Activated T-helper 1 cell treated with anti-CD3 and anti-CD28 coated beads, Interleukin-12 subunit alpha, Interleukin-12 subunit beta, Interleukin-2, Interleukin-4 antibody, amounts not matched to agents 30 ng/mL and 10 ng/mL and 1 ng/mL, durations not matched to agents 14 hours and 24 hours and 36 hours (primary cell): ENCODE measurements at regions of chr15 and their contacts with region 1.

Region 1: DNA sequence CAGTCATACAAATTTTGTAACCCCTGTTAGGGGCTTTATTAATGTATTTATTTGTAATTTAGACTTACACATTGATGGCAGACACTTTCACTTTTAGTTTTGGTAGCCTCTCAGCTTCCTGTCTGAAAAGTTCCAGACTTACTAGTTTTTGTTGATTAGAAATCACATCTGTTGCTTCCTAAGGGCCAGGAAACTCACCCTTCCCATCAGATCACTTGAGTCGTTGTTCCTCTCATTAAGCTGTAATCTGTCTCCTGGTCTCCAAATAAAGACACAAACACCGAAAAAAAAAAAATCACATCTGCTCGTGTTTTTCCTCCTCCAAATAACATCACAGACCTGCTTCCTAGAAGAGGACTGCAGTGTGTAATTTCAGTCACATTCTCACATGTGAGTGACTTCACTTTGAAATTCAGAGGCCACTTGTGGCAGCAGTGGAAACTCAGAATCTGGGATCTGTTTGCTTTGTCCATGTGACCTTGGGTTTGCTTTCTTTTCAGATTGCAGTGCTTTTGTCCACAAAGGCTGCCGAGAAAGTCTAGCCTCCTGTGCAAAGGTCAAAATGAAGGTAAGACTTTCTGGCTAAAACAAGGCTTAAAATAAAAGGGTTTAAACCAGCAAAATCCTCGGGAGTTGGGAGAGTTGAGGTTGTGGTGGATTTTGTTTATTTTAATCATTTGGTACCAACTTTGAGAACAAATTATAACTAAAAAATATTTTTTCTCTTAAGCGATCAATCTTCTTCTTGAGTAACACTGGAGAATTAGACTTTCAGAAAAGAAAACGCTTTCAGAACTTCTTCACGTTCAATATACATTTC is 87.0 kb downstream of the KLHL25 start:
- DNase-seq: no peak
- H3K4me3 Mint-ChIP-seq: peak overlapping the region; percentile 83
- H3K27ac Mint-ChIP-seq: peak overlapping the region; percentile 99
- H3K4me1 Mint-ChIP-seq: peaks cover 88% of the 10 kb centered on the region
- H3K27me3 Mint-ChIP-seq: no peaks in the 10 kb centered on the region

Region 2: GRCh38 chr15:85723960-85724945 is 16.5 kb after region 1 on chr15:
- intact Hi-C with region 1: loop called (anchors 1 kb)
- DNase-seq: no peak
- H3K4me3 Mint-ChIP-seq: peak overlapping the region; percentile 72
- H3K27ac Mint-ChIP-seq: peak overlapping the region; percentile 90
- H3K4me1 Mint-ChIP-seq: peaks cover 47% of the 10 kb centered on the region
- H3K27me3 Mint-ChIP-seq: no peaks in the 10 kb centered on the region